Astrocyte of the cerebellum (primary cell): ENCODE measurements at regions of chr16 and their contacts with region 1.

Region 1: DNA sequence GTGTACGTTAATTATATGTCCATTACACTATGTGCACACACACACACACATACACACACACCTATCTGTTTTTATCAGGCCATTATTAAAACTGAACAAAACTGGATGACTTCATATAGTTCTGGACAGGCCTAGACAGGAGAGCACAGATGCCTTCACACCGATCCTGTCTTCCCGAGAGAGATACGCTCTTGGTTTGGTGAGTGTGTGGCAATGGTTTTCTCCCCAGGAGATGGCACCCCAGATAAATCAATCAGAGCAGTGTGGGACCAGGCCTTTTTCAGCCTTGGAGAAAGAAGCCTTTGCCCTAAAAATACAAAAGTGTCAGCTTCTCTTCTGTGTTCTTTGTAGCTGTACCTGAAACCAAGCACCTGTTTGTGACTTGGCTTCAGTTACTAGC is 83.7 kb downstream of the CPPED1 start:
- DNase-seq: no peak
- H3K4me3 ChIP-seq: no peak overlapping the region
- CTCF ChIP-seq: no peak

Region 2: GRCh38 chr16:12655530-12655929 is 64.4 kb before region 1 on chr16:
- in situ Hi-C with region 1: loop called (anchors 5 kb)
- DNase-seq: no peak
- H3K4me3 ChIP-seq: no peak overlapping the region
- CTCF ChIP-seq: no peak

Region 3: GRCh38 chr16:12758031-12758701 is 38.2 kb after region 1 on chr16:
- in situ Hi-C with region 1: no loop called
- DNase-seq: no peak
- H3K4me3 ChIP-seq: no peak overlapping the region
- CTCF ChIP-seq: no peak